Tibial artery (tissue), 4 donors: ENCODE measurements at regions of chr11 and their contacts with region 1.

Region 1: GRCh38 chr11:57800444-57801182 is 39.0 kb downstream of the CTNND1 start:
- DNase-seq: no peak
- H3K4me3 ChIP-seq: no peak overlapping the region
- H3K27ac ChIP-seq: peak overlapping the region in 1 of 2 donors; percentile 26
- H3K4me1 ChIP-seq: peaks cover 0 to 32% (median 18%) of the 10 kb centered on the region in 4 donors
- H3K27me3 ChIP-seq: no peaks in the 10 kb centered on the region
- CTCF ChIP-seq: peak; percentile 83 to 89

Region 2: DNA sequence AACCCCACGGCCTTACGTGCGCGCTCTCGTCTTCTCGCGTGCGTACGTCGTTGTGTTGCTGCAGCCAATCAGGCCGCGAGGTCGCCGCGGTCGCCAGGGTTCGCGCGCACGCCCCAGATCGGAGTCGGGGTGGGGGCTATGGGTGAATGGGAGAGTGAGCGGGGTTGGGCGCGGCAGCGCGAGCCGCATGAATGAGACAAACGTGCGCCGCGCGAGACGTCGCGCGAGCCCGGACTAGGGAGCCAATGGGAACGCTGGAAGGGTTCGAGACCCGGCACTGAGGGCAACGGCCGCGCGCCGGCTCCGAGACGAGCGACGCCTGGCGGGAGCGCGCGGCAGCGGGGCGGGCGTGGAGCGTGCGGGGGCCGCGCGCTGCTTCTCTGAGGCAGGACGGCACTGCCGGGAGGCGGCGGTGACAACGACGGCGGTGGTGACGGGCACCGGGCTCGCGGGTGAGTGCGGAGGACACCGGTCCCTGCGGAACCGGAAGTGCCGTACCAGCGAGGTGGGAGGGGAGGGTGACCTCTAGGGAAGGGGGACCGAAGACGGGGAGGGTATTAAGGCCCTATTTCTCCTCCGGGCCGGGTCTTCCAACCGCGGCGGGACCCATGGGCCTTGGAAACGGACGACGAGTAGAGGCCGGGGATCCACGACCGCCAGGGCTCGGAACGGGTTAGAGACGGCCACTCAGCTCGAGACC is 132.7 kb before region 1 on chr11 and contains the start of gene ZDHHC5:
- intact Hi-C with region 1: loop called (anchors 10 kb)
- DNase-seq: peak; percentile 99
- H3K4me3 ChIP-seq: peak within 1 kb of the TSS; percentile 72 to 76
- H3K27ac ChIP-seq: peak within 1 kb of the TSS; percentile 92 to 95
- H3K4me1 ChIP-seq: peaks cover 0 to 26% (median 18%) of the 10 kb centered on the region in 4 donors
- H3K27me3 ChIP-seq: no peaks in the 10 kb centered on the region
- CTCF ChIP-seq: peak; percentile 47 to 48

Region 3: GRCh38 chr11:57700425-57700824 is 100.2 kb before region 1 on chr11:
- intact Hi-C with region 1: loop called (anchors 10 kb)
- DNase-seq: no peak
- H3K4me3 ChIP-seq: no peak overlapping the region
- H3K27ac ChIP-seq: no peak overlapping the region
- H3K4me1 ChIP-seq: no peaks in the 10 kb centered on the region
- H3K27me3 ChIP-seq: no peaks in the 10 kb centered on the region
- CTCF ChIP-seq: no peak

Region 4: DNA sequence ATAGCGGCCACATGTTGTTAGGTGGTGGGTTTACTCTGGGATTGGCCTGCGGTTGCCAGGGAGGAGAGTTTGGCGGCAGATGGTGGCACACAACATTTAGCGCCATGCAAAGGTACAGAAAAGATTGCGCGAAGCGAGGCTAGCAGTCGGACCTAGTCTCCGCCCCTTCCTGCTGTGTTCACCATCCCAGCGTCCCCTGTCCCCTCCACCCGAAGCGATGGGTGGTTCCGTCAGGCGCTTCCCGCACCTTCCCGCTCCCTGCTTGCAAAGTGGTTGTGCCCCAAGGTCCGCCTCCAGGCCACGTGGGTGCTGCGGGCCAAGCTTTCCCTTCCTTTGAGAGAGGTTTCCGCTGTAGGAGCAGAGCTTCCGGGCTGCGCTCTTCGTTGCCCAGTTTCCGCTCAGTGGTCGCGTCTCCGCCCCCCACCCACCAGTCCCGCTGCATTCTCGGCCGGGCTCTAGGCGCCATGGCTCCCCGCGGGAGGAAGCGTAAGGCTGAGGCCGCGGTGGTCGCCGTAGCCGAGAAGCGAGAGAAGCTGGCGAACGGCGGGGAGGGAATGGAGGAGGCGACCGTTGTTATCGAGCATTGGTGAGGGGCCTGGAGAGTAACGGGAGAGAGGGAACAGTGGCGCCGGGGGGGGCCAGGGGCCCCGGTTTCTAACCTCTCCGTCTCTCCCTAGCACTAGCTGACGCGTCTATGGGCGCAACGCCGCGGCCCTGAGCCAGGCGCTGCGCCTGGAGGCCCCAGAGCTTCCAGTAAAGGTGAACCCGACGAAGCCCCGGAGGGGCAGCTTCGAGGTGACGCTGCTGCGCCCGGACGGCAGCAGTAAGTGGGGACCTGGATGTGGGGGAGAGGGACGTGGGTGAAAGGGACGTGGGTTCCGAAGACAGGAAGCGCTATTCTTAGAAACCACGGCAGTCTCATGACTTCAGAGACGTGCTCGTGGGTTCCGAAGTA is 59.2 kb before region 1 on chr11 and contains the start of gene SELENOH:
- intact Hi-C with region 1: loop called (anchors 10 kb)
- DNase-seq: peak; percentile 96 to 98
- H3K4me3 ChIP-seq: peak within 1 kb of the TSS; percentile 98 to 100
- H3K27ac ChIP-seq: peak within 1 kb of the TSS; percentile 96 to 99
- H3K4me1 ChIP-seq: peaks cover 0 to 20% (median 10%) of the 10 kb centered on the region in 4 donors
- H3K27me3 ChIP-seq: no peaks in the 10 kb centered on the region
- CTCF ChIP-seq: no peak

Region 5: GRCh38 chr11:57761301-57762234 is 39.0 kb before region 1 on chr11 and contains the start of gene CTNND1:
- intact Hi-C with region 1: loop called (anchors 5 kb)
- DNase-seq: peak; percentile 89 to 95
- H3K4me3 ChIP-seq: peak within 1 kb of the TSS; percentile 55 to 64
- H3K27ac ChIP-seq: peak within 1 kb of the TSS; percentile 82 to 93
- H3K4me1 ChIP-seq: peaks cover 0 to 28% (median 22%) of the 10 kb centered on the region in 4 donors
- H3K27me3 ChIP-seq: no peaks in the 10 kb centered on the region
- CTCF ChIP-seq: no peak